Aorta (tissue), 5 donors: ENCODE measurements at regions of chr1 and their contacts with region 1.

Region 1: DNA sequence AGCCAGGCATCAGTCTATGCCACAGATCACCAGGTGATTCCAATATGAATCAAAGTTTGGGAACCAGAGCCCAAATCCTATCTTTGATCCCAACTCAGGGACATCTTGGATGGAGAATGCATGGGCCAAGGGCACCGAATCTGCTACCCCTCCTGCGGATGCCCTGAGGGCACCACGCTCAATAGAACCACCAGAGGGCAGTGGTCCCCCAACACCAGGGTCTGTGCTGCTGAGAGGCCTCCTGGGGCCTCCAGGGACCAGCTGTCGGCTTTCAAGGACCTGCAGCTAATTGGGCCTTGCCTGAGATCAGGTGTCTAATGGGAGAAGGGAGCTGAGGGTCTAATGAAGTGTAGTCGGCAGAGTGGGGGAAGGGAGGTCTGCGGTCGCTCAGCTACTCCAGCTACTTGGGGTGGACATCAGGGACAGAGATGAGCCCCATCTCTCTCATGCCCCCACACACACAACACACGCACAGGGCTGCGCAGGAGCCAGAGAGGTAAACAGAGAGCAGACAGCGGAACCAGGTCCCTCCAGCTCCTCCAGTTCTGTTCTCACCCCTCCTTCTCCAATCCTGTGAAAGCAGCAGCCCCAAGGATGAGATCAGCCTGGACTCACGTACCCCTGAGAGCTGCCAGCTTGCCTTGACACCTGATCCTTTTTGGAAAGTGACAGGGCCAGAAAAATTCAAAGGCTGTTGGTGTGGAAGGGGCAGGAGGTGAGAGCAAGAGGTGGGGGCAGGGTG is 34.9 kb upstream of the PPP1R15B start:
- DNase-seq: peak; percentile 82 to 88
- ATAC-seq: peak; percentile 74
- H3K4me3 ChIP-seq: no peak overlapping the region
- H3K27ac ChIP-seq: no peak overlapping the region
- H3K4me1 ChIP-seq: no peaks in the 10 kb centered on the region
- H3K27me3 ChIP-seq: no peaks in the 10 kb centered on the region

Region 2: GRCh38 chr1:204465546-204466415 is 19.2 kb after region 1 on chr1:
- intact Hi-C with region 1: loop called in 1 of 2 experiments (anchors 2 kb)
- DNase-seq: peak in 1 of 2 donors; percentile 71
- ATAC-seq: peak; percentile 43
- H3K4me3 ChIP-seq: no peak overlapping the region
- H3K27ac ChIP-seq: peak overlapping the region; percentile 5 to 96
- H3K4me1 ChIP-seq: peaks cover 4 to 7% of the 10 kb centered on the region in 2 donors
- H3K27me3 ChIP-seq: no peaks in the 10 kb centered on the region

Region 3: DNA sequence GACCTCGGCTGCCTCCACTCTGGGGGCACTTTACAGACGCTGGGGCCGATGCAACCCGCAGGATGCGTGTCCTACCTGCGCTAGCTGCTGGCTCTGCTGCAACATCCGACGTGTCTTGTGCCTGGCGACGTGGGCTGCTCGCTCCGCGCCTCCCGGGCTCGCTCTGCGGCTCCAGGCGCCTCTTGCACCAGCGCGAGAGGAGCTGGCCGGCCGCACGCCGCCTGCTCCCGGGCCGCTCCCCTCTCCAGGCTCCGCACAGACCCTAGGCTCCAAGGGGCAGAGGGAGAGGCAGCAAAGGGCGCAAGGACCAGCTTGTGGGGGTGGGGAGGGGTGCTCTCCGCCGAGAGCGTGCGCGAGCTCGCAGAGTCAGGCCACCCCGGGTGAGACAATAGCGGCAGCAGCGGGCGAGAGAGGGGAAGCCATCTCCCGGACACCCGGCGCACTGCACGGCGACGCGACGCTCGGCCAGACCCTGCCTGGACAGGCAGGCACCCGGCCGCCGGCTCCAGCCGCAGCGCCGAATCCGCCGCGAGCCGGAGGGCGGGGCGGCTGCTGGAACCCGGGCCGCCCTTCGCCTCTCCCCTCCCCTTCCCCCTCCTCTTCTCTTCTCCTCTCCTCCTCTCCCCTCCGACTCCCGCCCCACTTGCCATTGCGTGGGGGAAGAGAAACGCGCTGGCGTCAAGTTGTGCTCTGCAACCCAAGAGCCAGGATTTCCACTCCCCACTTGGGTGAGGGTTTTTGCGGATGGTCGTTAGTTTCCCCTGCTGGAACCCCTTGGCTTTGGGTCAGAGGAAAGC is 47.9 kb after region 1 on chr1 and contains the start of gene PIK3C2B:
- intact Hi-C with region 1: loop called (anchors 2 to 5 kb)
- DNase-seq: peak; percentile 92 to 94
- ATAC-seq: peak; percentile 94
- H3K4me3 ChIP-seq: peak within 1 kb of the TSS; percentile 51 to 85
- H3K27ac ChIP-seq: peak within 1 kb of the TSS in 1 of 2 donors; percentile 62
- H3K4me1 ChIP-seq: peaks cover 0 to 4% of the 10 kb centered on the region in 2 donors
- H3K27me3 ChIP-seq: no peaks in the 10 kb centered on the region
- total RNA-seq, gene PIK3C2B: 41.3 to 87.5 TPM

Region 4: DNA sequence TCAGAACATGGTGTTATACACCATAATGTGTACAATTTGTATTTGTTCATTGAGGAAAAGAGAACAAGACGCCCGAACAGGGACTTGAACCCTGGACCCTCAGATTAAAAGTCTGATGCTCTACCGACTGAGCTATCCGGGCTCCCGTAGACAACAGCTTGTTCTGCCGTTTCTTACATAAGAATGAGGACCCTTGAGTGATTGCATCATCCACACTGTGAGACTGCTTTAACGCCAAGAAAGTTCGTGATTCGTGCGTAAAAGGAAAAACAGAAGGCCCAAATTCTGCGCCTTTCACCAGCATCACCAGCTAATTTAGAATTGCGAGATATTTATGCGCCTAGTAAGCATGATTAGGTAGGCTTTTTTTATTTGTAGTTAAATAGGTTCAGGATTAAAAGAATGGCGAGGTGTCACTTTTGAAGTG is 60.4 kb after region 1 on chr1:
- intact Hi-C with region 1: loop called in 1 of 2 experiments (anchors 1 kb)
- DNase-seq: peak in 1 of 2 donors; percentile 81
- ATAC-seq: peak; percentile 94
- H3K4me3 ChIP-seq: peak overlapping the region; percentile 67 to 86
- H3K27ac ChIP-seq: peak overlapping the region; percentile 30 to 57
- H3K4me1 ChIP-seq: no peaks in the 10 kb centered on the region
- H3K27me3 ChIP-seq: no peaks in the 10 kb centered on the region